CD8-positive, alpha-beta T cell (primary cell): ENCODE measurements at regions of chr19 and their contacts with region 1.

Region 1: DNA sequence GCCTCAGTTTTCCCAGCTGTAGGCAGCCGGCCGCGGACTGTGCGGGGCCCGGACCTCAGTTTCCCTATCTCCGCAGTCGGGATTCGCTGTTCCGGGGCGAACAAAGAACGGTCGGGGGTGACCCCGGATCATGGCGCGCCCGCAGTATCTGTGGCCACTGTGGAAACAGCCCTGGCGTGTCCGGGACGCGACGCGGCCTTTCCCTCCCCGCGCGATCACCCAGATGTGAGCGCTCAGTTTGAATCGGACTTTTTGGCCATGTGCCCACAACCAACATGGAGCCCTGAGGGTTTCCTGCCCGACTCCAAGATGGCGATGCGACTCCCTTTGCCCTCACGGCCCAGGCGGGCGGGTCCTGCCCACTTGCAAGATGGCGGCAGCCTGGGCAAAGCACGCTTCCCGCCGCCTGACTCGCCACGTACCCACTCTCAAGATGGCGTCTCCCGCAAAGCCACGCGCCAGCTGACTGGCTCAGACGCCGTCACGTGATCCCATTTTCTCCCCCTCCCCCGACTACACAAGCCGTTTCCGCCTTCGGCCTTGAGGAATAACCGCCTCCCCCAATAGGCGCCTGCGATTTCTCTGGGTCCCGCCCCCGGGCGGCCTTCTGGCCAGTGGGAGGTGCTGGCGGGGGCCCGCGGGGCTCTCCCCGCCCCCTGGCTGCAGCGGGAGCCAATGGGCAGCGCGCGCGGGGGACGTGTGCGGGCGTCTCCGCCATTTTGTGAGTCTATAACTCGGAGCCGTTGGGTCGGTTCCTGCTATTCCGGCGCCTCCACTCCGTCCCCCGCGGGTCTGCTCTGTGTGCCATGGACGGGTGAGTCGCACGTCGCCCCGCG is at the start of gene PTBP1:
- DNase-seq: peak in 8 of 9 experiments; percentile 98 to 100 (median 99)
- ATAC-seq: peak; percentile 85
- H3K4me3 ChIP-seq: peak within 1 kb of the TSS; percentile 78 to 79
- H3K4me3 Mint-ChIP-seq: peak within 1 kb of the TSS; percentile 93
- H3K27ac ChIP-seq: peak within 1 kb of the TSS; percentile 62 to 75
- H3K27ac Mint-ChIP-seq: peak within 1 kb of the TSS; percentile 91
- H3K4me1 ChIP-seq: peaks cover 40% of the 10 kb centered on the region
- H3K4me1 Mint-ChIP-seq: peaks cover 32% of the 10 kb centered on the region
- H3K27me3 ChIP-seq: no peaks in the 10 kb centered on the region
- H3K27me3 Mint-ChIP-seq: no peaks in the 10 kb centered on the region
- CTCF ChIP-seq: no peak
- total RNA-seq, gene PTBP1: 248 to 266 TPM

Region 2: GRCh38 chr19:531009-531752 is 265.7 kb before region 1 on chr19:
- CTCF ChIA-PET with region 1: no interaction called
- POLR2A ChIA-PET with region 1: no interaction called
- intact Hi-C with region 1: loop called in 1 of 2 experiments (anchors 1 kb)
- DNase-seq: peak; percentile 79 to 93 (median 85)
- ATAC-seq: peak; percentile 80
- H3K4me3 ChIP-seq: peak overlapping the region; percentile 64 to 87
- H3K4me3 Mint-ChIP-seq: peak overlapping the region; percentile 82
- H3K27ac ChIP-seq: peak overlapping the region; percentile 73 to 74
- H3K27ac Mint-ChIP-seq: peak overlapping the region; percentile 87
- H3K4me1 ChIP-seq: peaks cover 20% of the 10 kb centered on the region
- H3K4me1 Mint-ChIP-seq: peaks cover 14% of the 10 kb centered on the region
- H3K27me3 ChIP-seq: no peaks in the 10 kb centered on the region
- H3K27me3 Mint-ChIP-seq: peaks cover 7% of the 10 kb centered on the region
- CTCF ChIP-seq: no peak

Region 3: GRCh38 chr19:633068-633785 is 163.7 kb before region 1 on chr19 and contains the start of gene POLRMT:
- CTCF ChIA-PET with region 1: no interaction called
- POLR2A ChIA-PET with region 1: no interaction called
- intact Hi-C with region 1: loop called in 1 of 2 experiments (anchors 1 kb)
- DNase-seq: peak; percentile 88 to 99 (median 95)
- ATAC-seq: peak; percentile 95
- H3K4me3 ChIP-seq: peak within 1 kb of the TSS; percentile 89 to 93
- H3K4me3 Mint-ChIP-seq: peak within 1 kb of the TSS; percentile 95
- H3K27ac ChIP-seq: peak within 1 kb of the TSS; percentile 61 to 72
- H3K27ac Mint-ChIP-seq: peak within 1 kb of the TSS; percentile 94
- H3K4me1 ChIP-seq: peaks cover 22% of the 10 kb centered on the region
- H3K4me1 Mint-ChIP-seq: peaks cover 30% of the 10 kb centered on the region
- H3K27me3 ChIP-seq: no peaks in the 10 kb centered on the region
- H3K27me3 Mint-ChIP-seq: no peaks in the 10 kb centered on the region
- CTCF ChIP-seq: no peak
- total RNA-seq, gene POLRMT: 48.6 to 53.7 TPM

Region 4: DNA sequence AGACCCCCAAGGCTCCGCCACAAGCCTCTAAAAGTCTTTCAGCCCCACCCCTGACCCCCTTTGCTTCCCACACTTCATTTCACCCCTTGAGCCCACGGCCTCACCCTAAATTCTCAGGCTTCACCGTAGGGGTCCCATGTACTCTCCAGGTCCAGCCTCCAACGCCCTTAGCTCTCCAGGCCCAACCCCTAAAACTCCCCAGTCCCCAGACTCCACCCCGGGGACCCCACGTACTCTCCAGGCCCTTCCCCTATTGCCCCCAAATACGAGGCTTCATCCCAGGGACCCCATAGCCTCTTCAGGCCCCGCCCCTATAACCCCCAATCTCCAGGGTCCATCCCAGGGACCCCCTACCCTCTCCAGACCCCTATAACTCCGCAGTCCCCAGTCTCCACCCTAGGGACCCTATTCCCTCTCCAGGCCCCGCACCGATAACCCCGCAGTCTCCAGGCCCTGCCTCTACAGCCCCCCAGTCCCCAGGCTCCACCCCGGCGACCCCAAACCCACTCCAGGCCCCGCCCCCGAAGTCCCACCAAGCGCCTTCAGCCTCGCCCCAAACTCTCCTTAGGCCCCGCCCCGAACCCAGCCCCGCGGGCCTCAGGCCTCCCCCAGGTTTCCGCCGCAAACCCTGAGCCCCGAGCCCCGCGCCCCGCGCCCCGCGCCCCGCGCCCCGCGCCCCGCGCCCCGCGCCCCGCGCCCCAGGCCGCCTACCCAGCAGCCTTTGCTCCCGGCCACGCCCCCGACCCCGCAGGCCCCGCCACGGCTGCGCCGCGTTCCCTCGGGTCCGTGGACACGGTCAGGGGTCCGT is 95.5 kb after region 1 on chr19:
- CTCF ChIA-PET with region 1: no interaction called
- POLR2A ChIA-PET with region 1: no interaction called
- intact Hi-C with region 1: loop called in 1 of 2 experiments (anchors 1 kb)
- DNase-seq: peak in 5 of 9 experiments; percentile 37 to 54 (median 48)
- ATAC-seq: peak; percentile 35
- H3K4me3 ChIP-seq: peak overlapping the region; percentile 62 to 67
- H3K4me3 Mint-ChIP-seq: peak overlapping the region; percentile 95
- H3K27ac ChIP-seq: peak overlapping the region; percentile 65 to 98
- H3K27ac Mint-ChIP-seq: peak overlapping the region; percentile 100
- H3K4me1 ChIP-seq: peaks cover 11% of the 10 kb centered on the region
- H3K4me1 Mint-ChIP-seq: peaks cover 36% of the 10 kb centered on the region
- H3K27me3 ChIP-seq: no peaks in the 10 kb centered on the region
- H3K27me3 Mint-ChIP-seq: no peaks in the 10 kb centered on the region
- CTCF ChIP-seq: no peak

Region 5: DNA sequence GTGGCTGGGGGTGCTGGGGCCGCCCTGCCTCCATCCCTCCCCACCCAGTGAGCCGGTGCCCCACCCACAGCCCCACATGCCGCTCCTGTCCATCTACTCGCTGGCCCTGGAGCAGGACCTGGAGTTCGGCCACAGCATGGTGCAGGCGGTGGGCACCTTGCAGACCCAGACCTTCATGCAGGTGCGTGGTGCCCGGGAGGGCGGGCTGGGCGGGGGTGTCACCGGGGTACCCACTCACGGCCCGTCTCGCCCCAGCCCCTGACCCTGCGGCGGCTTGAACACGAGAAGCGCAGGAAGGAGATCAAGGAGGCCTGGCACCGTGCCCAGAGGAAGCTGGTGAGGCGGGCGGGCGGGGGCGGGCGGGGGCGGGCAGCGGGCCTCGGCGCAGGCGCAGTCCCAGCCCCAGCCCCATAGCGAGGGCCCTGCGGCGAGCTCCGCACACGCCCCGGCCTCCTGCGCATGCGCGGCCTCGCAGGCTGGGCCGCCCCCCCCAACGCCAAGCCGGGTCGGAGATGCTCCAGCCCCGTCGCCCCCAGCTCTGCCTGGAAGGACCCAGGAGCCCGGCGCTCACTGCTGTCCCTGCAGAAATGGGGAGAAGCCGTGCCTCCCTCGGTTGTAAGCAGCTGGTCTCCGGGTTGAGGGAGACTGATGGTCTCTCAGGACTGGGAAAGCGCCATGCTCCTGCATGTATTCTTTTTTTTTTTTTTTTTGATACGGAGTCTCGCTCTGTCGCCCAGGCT is 277.8 kb after region 1 on chr19:
- CTCF ChIA-PET with region 1: no interaction called
- POLR2A ChIA-PET with region 1: interaction called, 3 read pairs
- intact Hi-C with region 1: loop called in 1 of 2 experiments (anchors 10 kb)
- DNase-seq: peak; percentile 90 to 100 (median 97)
- ATAC-seq: peak; percentile 27
- H3K4me3 ChIP-seq: peak overlapping the region; percentile 40 to 63
- H3K4me3 Mint-ChIP-seq: peak overlapping the region; percentile 79
- H3K27ac ChIP-seq: peak overlapping the region; percentile 60 to 98
- H3K27ac Mint-ChIP-seq: peak overlapping the region; percentile 100
- H3K4me1 ChIP-seq: peaks cover 75% of the 10 kb centered on the region
- H3K4me1 Mint-ChIP-seq: peaks cover 51% of the 10 kb centered on the region
- H3K27me3 ChIP-seq: no peaks in the 10 kb centered on the region
- H3K27me3 Mint-ChIP-seq: no peaks in the 10 kb centered on the region
- CTCF ChIP-seq: no peak

Region 6: GRCh38 chr19:1490311-1491113 is 693.6 kb after region 1 on chr19 and contains the start of gene PCSK4:
- CTCF ChIA-PET with region 1: no interaction called
- POLR2A ChIA-PET with region 1: no interaction called
- intact Hi-C with region 1: loop called in 1 of 2 experiments (anchors 5 kb)
- DNase-seq: peak; percentile 95 to 99 (median 97)
- ATAC-seq: peak; percentile 88
- H3K4me3 ChIP-seq: peak within 1 kb of the TSS; percentile 59 to 71
- H3K4me3 Mint-ChIP-seq: peak within 1 kb of the TSS; percentile 90
- H3K27ac ChIP-seq: peak within 1 kb of the TSS; percentile 35 to 57
- H3K27ac Mint-ChIP-seq: peak within 1 kb of the TSS; percentile 90
- H3K4me1 ChIP-seq: peaks cover 15% of the 10 kb centered on the region
- H3K4me1 Mint-ChIP-seq: peaks cover 16% of the 10 kb centered on the region
- H3K27me3 ChIP-seq: no peaks in the 10 kb centered on the region
- H3K27me3 Mint-ChIP-seq: no peaks in the 10 kb centered on the region
- CTCF ChIP-seq: no peak
- total RNA-seq, gene PCSK4: 5.4 to 6.1 TPM